Transverse colon (tissue), 4 donors: ENCODE measurements at regions of chr7 and their contacts with region 1.

Region 1: DNA sequence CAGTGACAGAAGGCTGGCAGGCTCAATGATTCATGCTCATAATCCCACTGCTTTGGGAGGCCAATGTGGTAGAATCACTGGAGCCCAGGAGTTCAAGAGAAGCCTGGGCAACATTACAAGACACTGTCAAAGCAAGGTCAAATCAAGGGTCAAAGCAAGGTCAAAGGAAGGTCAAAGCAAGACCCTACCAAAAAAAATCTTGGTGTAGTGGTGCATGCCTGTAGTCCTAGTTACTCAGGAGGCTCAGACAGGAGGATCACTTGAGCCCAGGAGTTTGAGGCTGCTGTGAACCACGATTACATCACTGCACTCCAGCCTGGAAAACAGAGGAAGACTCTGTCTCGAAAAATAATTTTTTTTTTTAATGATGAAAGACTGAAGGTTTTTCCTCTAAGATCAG is 14.3 kb upstream of the NPC1L1 start:
- DNase-seq: no peak
- H3K4me3 ChIP-seq: no peak overlapping the region
- H3K27ac ChIP-seq: no peak overlapping the region
- H3K4me1 ChIP-seq: no peaks in the 10 kb centered on the region
- H3K27me3 ChIP-seq: no peaks in the 10 kb centered on the region
- CTCF ChIP-seq: no peak
- EP300 ChIP-seq: no peak
- POLR2A ChIP-seq: no peak

Region 2: GRCh38 chr7:44490351-44491200 is 64.8 kb before region 1 on chr7 and contains the start of gene NUDCD3:
- in situ Hi-C with region 1: no loop called
- intact Hi-C with region 1: loop called (anchors 2 kb)
- DNase-seq: peak; percentile 87
- H3K4me3 ChIP-seq: peak within 1 kb of the TSS; percentile 48 to 89 (median 70)
- H3K27ac ChIP-seq: peak within 1 kb of the TSS; percentile 92 to 98 (median 94)
- H3K4me1 ChIP-seq: peaks cover 9 to 46% (median 31%) of the 10 kb centered on the region in 4 donors
- H3K27me3 ChIP-seq: peaks cover 9% of the 10 kb centered on the region
- CTCF ChIP-seq: peak in 2 of 5 experiments; percentile 2 to 25
- EP300 ChIP-seq: no peak
- POLR2A ChIP-seq: peak; percentile 65
- total RNA-seq, gene NUDCD3: 31.9 to 76.7 (median 38.6) TPM

Region 3: DNA sequence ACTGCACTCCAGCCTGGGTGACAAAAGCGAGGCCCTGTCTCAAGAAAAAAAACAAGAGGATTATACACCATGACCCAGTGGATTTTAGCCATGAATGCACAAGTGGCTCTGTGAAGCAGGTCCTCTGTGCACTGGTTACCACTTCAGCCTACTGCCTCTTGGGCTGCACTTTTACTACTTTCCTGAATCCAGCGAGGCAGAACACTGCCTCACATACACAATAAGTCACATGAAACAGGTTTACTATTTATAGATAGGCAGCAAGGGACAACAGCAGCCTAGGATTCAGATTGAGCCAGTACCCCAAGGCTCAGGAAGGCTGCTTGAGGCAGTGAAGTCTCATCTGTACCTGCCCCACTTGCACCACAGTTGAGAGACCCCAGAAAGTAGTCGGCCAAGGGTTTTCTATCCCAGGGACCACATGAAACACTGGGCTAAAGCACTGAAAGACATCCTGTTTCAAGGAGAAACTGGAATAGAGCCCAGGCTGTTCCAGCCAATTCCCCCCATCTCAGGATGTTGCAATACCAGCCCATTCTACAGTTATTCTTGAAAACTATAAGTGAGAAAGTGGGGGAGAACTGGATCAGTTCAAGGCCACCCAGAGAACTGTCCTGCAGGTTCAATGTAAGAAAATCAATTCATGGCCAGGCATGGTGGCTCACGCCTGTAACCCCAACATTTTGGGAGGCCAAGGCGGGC is 40.7 kb after region 1 on chr7:
- in situ Hi-C with region 1: no loop called
- intact Hi-C with region 1: no loop called
- DNase-seq: no peak
- H3K4me3 ChIP-seq: no peak overlapping the region
- H3K27ac ChIP-seq: no peak overlapping the region
- H3K4me1 ChIP-seq: no peaks in the 10 kb centered on the region
- H3K27me3 ChIP-seq: no peaks in the 10 kb centered on the region
- CTCF ChIP-seq: no peak
- EP300 ChIP-seq: no peak
- POLR2A ChIP-seq: no peak

Region 4: GRCh38 chr7:44712012-44712411 is 156.6 kb after region 1 on chr7:
- in situ Hi-C with region 1: no loop called
- intact Hi-C with region 1: no loop called
- DNase-seq: no peak
- H3K4me3 ChIP-seq: no peak overlapping the region
- H3K27ac ChIP-seq: no peak overlapping the region
- H3K4me1 ChIP-seq: no peaks in the 10 kb centered on the region
- H3K27me3 ChIP-seq: no peaks in the 10 kb centered on the region
- CTCF ChIP-seq: no peak
- EP300 ChIP-seq: no peak
- POLR2A ChIP-seq: no peak